Heart left ventricle (tissue), 16 donors: ENCODE measurements at regions of chr1 and their contacts with region 1.

Region 1: GRCh38 chr1:212665241-212666115 is 34.2 kb downstream of the BATF3 start:
- DNase-seq: peak; percentile 84 to 92 (median 90)
- ATAC-seq: peak; percentile 95 to 98 (median 96)
- H3K4me3 ChIP-seq: peak overlapping the region; percentile 27 to 78 (median 64)
- H3K27ac ChIP-seq: peak overlapping the region in 11 of 12 donors; percentile 50 to 87 (median 77)
- H3K4me1 ChIP-seq: peaks cover 0 to 47% (median 23%) of the 10 kb centered on the region in 12 donors
- H3K27me3 ChIP-seq: no peaks in the 10 kb centered on the region
- CTCF ChIP-seq: peak; percentile 91 to 99 (median 97)
- POLR2A ChIP-seq: no peak

Region 2: GRCh38 chr1:212539737-212540430 is 125.6 kb before region 1 on chr1:
- intact Hi-C with region 1: no loop called
- DNase-seq: no peak
- ATAC-seq: no peak
- H3K4me3 ChIP-seq: no peak overlapping the region
- H3K27ac ChIP-seq: no peak overlapping the region
- H3K4me1 ChIP-seq: peaks cover 0 to 26% (median 0%) of the 10 kb centered on the region in 12 donors
- H3K27me3 ChIP-seq: no peaks in the 10 kb centered on the region
- CTCF ChIP-seq: no peak
- POLR2A ChIP-seq: no peak

Region 3: GRCh38 chr1:212608209-212608955 is 57.1 kb before region 1 on chr1 and contains the start of gene ATF3:
- intact Hi-C with region 1: loop called in 2 of 10 experiments (anchors 2 to 5 kb)
- DNase-seq: peak; percentile 99 to 100 (median 100)
- ATAC-seq: peak; percentile 95 to 98 (median 97)
- H3K4me3 ChIP-seq: peak within 1 kb of the TSS; percentile 62 to 89 (median 75)
- H3K27ac ChIP-seq: peak within 1 kb of the TSS; percentile 90 to 99 (median 95)
- H3K4me1 ChIP-seq: peaks cover 0 to 64% (median 45%) of the 10 kb centered on the region in 12 donors
- H3K27me3 ChIP-seq: peaks cover 0 to 30% (median 0%) of the 10 kb centered on the region in 9 donors
- CTCF ChIP-seq: no peak
- POLR2A ChIP-seq: peak; percentile 76 to 99
- total RNA-seq, gene ATF3: 4.6 to 49.0 (median 11.0) TPM

Region 4: GRCh38 chr1:212700892-212701819 is 35.7 kb after region 1 on chr1:
- intact Hi-C with region 1: loop called in 2 of 10 experiments (anchors 5 kb)
- DNase-seq: peak; percentile 41 to 72 (median 55)
- ATAC-seq: peak; percentile 60 to 76 (median 73)
- H3K4me3 ChIP-seq: peak overlapping the region; percentile 32 to 71 (median 62)
- H3K27ac ChIP-seq: peak overlapping the region in 10 of 12 donors; percentile 54 to 81 (median 71)
- H3K4me1 ChIP-seq: peaks cover 0 to 31% (median 15%) of the 10 kb centered on the region in 12 donors
- H3K27me3 ChIP-seq: peaks cover 0 to 22% (median 3%) of the 10 kb centered on the region in 9 donors
- CTCF ChIP-seq: peak in 2 of 12 donors; percentile 15 to 28
- POLR2A ChIP-seq: no peak

Region 5: DNA sequence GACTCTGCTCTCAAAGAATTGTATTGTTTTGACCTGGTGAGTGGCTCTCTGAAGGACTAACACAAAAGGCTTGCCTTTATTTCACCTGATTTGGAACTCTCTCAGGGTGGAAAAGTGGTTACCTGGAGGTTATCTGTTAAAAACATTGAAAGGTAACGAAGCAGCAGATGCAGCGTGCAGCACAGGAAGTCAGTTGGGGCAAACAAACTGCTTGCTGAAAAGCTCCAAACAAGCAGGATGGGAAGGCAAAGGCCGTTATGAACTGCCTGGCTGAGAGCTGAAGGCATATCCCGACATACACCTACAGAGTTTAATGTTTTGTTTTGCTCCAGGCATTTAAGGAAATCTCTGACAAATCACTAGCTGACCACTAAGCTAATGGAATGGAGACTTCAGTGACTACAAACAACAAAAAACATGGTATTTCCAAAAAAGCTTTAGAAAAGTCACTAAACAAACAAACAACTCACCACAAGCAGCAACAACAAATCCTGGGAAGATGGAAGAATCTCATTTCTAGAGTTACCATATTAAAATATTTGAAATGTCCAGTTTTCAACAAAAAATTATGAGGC is 78.5 kb after region 1 on chr1:
- intact Hi-C with region 1: no loop called
- DNase-seq: no peak
- ATAC-seq: no peak
- H3K4me3 ChIP-seq: no peak overlapping the region
- H3K27ac ChIP-seq: no peak overlapping the region
- H3K4me1 ChIP-seq: no peaks in the 10 kb centered on the region
- H3K27me3 ChIP-seq: no peaks in the 10 kb centered on the region
- CTCF ChIP-seq: no peak
- POLR2A ChIP-seq: no peak

Region 6: GRCh38 chr1:212782422-212783154 is 117.1 kb after region 1 on chr1:
- intact Hi-C with region 1: loop called in 9 of 10 experiments (anchors 1 to 5 kb)
- DNase-seq: peak in 1 of 5 donors; percentile 40
- ATAC-seq: peak in 2 of 4 donors; percentile 38 to 54
- H3K4me3 ChIP-seq: no peak overlapping the region
- H3K27ac ChIP-seq: peak overlapping the region in 1 of 12 donors; percentile 71
- H3K4me1 ChIP-seq: peaks cover 0 to 28% (median 0%) of the 10 kb centered on the region in 12 donors
- H3K27me3 ChIP-seq: no peaks in the 10 kb centered on the region
- CTCF ChIP-seq: peak; percentile 47 to 70 (median 58)
- POLR2A ChIP-seq: no peak